CD8-positive, alpha-beta T cell (primary cell): ENCODE measurements at regions of chr19 and their contacts with region 1.

Region 1: GRCh38 chr19:3185482-3186376 is at the start of gene NCLN:
- DNase-seq: peak; percentile 91 to 98 (median 94)
- ATAC-seq: peak; percentile 84
- H3K4me3 ChIP-seq: peak within 1 kb of the TSS; percentile 66 to 76
- H3K4me3 Mint-ChIP-seq: peak within 1 kb of the TSS; percentile 92
- H3K27ac ChIP-seq: peak within 1 kb of the TSS; percentile 34 to 84
- H3K27ac Mint-ChIP-seq: peak within 1 kb of the TSS; percentile 89
- H3K4me1 ChIP-seq: peaks cover 67% of the 10 kb centered on the region
- H3K4me1 Mint-ChIP-seq: peaks cover 61% of the 10 kb centered on the region
- H3K27me3 ChIP-seq: no peaks in the 10 kb centered on the region
- H3K27me3 Mint-ChIP-seq: no peaks in the 10 kb centered on the region
- CTCF ChIP-seq: no peak
- total RNA-seq, gene NCLN: 47.3 to 55.7 TPM

Region 2: DNA sequence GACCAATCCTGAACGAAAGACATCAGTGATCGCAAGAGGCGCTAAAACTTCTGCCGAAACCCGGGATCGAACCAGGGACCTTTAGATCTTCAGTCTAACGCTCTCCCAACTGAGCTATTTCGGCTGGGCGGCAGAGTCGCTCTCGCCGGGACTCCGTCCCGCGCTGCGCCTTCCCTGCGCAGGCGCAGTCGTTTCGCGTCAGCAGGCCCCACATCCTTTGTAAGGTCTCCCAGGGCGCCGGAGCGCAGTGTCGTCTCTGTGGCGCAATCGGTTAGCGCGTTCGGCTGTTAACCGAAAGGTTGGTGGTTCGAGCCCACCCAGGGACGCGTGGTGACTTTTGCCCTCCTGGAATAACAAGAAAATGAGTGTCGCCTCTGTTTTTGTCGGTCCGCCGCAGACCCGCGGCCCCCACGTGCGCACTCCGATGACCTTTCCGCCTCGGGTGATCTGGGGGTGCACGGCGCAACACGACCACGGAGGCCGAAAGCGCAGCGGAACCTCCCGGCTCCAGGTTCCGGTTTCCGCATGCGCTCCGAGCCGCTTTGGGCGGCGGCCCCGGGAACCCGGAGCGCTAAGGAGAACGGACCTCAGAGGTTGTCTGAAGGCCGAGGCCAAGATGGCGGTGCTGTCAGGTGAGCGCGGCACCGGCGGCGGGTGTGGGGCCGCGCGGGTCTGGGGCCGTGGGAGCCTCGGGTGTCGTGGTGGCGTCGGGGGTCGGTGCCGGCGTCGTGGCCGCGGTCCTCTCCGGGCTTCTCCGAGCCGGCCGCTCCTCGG is 1802.2 kb before region 1 on chr19 and contains the start of gene NDUFS7:
- CTCF ChIA-PET with region 1: no interaction called
- POLR2A ChIA-PET with region 1: no interaction called
- intact Hi-C with region 1: loop called in 1 of 2 experiments (anchors 10 kb)
- DNase-seq: peak; percentile 91 to 100 (median 95)
- ATAC-seq: peak; percentile 90
- H3K4me3 ChIP-seq: peak within 1 kb of the TSS; percentile 93 to 94
- H3K4me3 Mint-ChIP-seq: peak within 1 kb of the TSS; percentile 94
- H3K27ac ChIP-seq: peak within 1 kb of the TSS; percentile 72 to 91
- H3K27ac Mint-ChIP-seq: peak within 1 kb of the TSS; percentile 99
- H3K4me1 ChIP-seq: peaks cover 10% of the 10 kb centered on the region
- H3K4me1 Mint-ChIP-seq: peaks cover 16% of the 10 kb centered on the region
- H3K27me3 ChIP-seq: no peaks in the 10 kb centered on the region
- H3K27me3 Mint-ChIP-seq: peaks cover 2% of the 10 kb centered on the region
- CTCF ChIP-seq: no peak
- total RNA-seq, gene NDUFS7: 38.6 to 41.1 TPM

Region 3: DNA sequence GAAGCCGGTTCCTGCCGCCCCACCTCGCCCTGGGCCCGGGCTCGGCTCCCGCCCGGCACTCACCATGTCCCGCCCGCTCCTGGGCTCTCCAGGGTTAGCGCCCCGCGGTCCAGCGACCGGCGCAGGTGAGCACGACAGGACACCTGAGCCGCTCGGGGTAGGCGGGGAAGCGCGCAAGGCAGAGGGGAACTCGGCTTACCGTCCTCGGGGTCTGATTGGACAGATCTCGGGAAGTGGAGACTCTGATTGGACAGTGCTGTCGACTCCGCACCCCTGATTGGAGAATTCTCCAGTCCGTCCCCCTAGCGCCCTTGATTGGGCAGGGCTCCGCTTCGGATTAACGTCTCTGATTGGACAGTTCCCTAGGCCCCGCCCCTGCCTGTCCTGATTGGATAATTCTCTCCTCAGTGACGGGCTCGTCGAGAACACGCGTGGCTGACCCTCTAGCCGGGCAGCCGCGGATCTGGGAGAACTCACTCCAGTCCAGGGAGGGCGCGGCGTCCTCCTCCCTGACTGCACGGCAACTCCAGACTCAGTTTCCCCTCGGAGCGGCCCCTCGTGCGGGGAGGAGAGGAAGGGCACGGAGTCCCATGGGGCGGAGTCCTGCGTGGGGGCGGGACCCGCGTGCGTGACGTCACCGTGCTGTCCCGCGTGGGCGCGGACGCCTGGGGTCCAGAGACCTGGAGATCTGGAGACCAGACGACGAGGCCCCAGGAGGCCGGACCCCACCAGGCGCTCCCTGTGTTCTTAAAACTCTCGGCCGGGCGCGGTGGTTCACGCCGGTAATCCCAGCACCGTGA is 240.8 kb before region 1 on chr19 and contains the start of gene ZNF77:
- CTCF ChIA-PET with region 1: no interaction called
- POLR2A ChIA-PET with region 1: no interaction called
- intact Hi-C with region 1: loop called (anchors 1 kb)
- DNase-seq: peak; percentile 97 to 100 (median 99)
- ATAC-seq: peak; percentile 97
- H3K4me3 ChIP-seq: peak within 1 kb of the TSS; percentile 80 to 84
- H3K4me3 Mint-ChIP-seq: peak within 1 kb of the TSS; percentile 96
- H3K27ac ChIP-seq: peak within 1 kb of the TSS; percentile 82 to 90
- H3K27ac Mint-ChIP-seq: peak within 1 kb of the TSS; percentile 97
- H3K4me1 ChIP-seq: peaks cover 21% of the 10 kb centered on the region
- H3K4me1 Mint-ChIP-seq: peaks cover 33% of the 10 kb centered on the region
- H3K27me3 ChIP-seq: no peaks in the 10 kb centered on the region
- H3K27me3 Mint-ChIP-seq: no peaks in the 10 kb centered on the region
- CTCF ChIP-seq: no peak
- total RNA-seq, gene ZNF77: 1.4 to 2.0 TPM

Region 4: GRCh38 chr19:2977001-2977685 is 208.6 kb before region 1 on chr19 and contains the start of gene TLE6:
- CTCF ChIA-PET with region 1: no interaction called
- POLR2A ChIA-PET with region 1: no interaction called
- intact Hi-C with region 1: loop called in 1 of 2 experiments (anchors 1 kb)
- DNase-seq: peak; percentile 87 to 96 (median 93)
- ATAC-seq: peak; percentile 99
- H3K4me3 ChIP-seq: peak within 1 kb of the TSS; percentile 67 to 84
- H3K4me3 Mint-ChIP-seq: peak within 1 kb of the TSS; percentile 93
- H3K27ac ChIP-seq: no peak within 1 kb of the TSS
- H3K27ac Mint-ChIP-seq: peak within 1 kb of the TSS; percentile 52
- H3K4me1 ChIP-seq: peaks cover 12% of the 10 kb centered on the region
- H3K4me1 Mint-ChIP-seq: peaks cover 16% of the 10 kb centered on the region
- H3K27me3 ChIP-seq: no peaks in the 10 kb centered on the region
- H3K27me3 Mint-ChIP-seq: peaks cover 6% of the 10 kb centered on the region
- CTCF ChIP-seq: no peak
- total RNA-seq, gene TLE6: not detected

Region 5: GRCh38 chr19:3500429-3501130 is 314.9 kb after region 1 on chr19 and contains the start of gene DOHH:
- CTCF ChIA-PET with region 1: no interaction called
- POLR2A ChIA-PET with region 1: no interaction called
- intact Hi-C with region 1: loop called (anchors 1 to 10 kb)
- DNase-seq: peak; percentile 88 to 98 (median 96)
- ATAC-seq: peak; percentile 84
- H3K4me3 ChIP-seq: peak within 1 kb of the TSS; percentile 57 to 95
- H3K4me3 Mint-ChIP-seq: peak within 1 kb of the TSS; percentile 93
- H3K27ac ChIP-seq: peak within 1 kb of the TSS; percentile 85 to 96
- H3K27ac Mint-ChIP-seq: peak within 1 kb of the TSS; percentile 99
- H3K4me1 ChIP-seq: peaks cover 19% of the 10 kb centered on the region
- H3K4me1 Mint-ChIP-seq: peaks cover 35% of the 10 kb centered on the region
- H3K27me3 ChIP-seq: no peaks in the 10 kb centered on the region
- H3K27me3 Mint-ChIP-seq: no peaks in the 10 kb centered on the region
- CTCF ChIP-seq: no peak
- total RNA-seq, gene DOHH: 3.4 to 3.9 TPM

Region 6: DNA sequence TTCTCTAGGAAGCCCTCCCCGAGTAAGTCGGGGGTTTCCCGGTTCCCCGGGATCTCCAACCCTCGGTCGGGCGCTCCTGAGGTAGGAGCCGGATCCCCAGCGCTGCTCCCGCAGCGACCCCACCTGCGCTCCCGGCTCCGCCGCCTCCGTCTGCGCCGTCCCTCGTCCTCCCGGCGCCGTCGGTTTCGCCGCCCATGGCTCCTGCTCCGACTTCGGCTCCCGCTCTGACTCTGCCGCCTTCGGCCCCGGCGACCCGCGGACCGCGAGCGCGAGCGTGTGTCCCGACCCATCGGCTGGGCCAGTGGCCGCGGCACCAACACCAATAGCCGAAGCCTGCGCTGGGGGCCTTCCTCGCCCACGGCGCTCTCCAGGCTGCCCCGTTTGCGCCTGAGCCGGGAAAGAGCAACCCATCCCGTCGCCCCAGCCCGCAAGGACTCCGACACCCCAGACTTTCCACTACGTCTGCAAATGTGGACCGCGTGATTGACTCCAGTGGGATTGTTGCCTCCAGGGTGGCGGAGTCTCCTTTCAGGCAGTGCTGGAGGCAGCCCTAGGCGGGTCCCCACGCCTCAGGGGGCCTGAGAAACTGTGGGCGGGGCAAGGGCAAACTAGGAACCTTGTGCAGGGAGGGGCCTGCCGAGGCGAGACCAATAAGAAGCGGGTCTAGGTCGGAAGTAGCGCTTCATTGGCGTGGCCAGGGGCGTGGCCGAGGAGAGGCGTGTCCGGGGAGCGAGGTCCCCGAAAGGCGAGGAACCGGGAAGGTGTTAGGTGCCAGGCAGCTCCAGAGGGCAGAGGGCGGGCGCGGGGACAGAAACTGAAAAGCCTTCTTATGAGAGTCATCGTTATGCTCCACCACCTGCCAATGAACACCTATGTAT is 441.0 kb after region 1 on chr19 and contains the start of gene CACTIN:
- CTCF ChIA-PET with region 1: no interaction called
- POLR2A ChIA-PET with region 1: no interaction called
- intact Hi-C with region 1: loop called in 1 of 2 experiments (anchors 2 kb)
- DNase-seq: peak; percentile 97 to 99 (median 99)
- ATAC-seq: peak; percentile 99
- H3K4me3 ChIP-seq: peak within 1 kb of the TSS; percentile 77 to 80
- H3K4me3 Mint-ChIP-seq: peak within 1 kb of the TSS; percentile 85
- H3K27ac ChIP-seq: peak within 1 kb of the TSS; percentile 74 to 99
- H3K27ac Mint-ChIP-seq: peak within 1 kb of the TSS; percentile 99
- H3K4me1 ChIP-seq: peaks cover 20% of the 10 kb centered on the region
- H3K4me1 Mint-ChIP-seq: peaks cover 26% of the 10 kb centered on the region
- H3K27me3 ChIP-seq: no peaks in the 10 kb centered on the region
- H3K27me3 Mint-ChIP-seq: no peaks in the 10 kb centered on the region
- CTCF ChIP-seq: no peak
- total RNA-seq, gene CACTIN: 32.5 to 33.0 TPM